ENCODE measurements at regions of chr11 and their contacts with region 1.

Region 1: DNA sequence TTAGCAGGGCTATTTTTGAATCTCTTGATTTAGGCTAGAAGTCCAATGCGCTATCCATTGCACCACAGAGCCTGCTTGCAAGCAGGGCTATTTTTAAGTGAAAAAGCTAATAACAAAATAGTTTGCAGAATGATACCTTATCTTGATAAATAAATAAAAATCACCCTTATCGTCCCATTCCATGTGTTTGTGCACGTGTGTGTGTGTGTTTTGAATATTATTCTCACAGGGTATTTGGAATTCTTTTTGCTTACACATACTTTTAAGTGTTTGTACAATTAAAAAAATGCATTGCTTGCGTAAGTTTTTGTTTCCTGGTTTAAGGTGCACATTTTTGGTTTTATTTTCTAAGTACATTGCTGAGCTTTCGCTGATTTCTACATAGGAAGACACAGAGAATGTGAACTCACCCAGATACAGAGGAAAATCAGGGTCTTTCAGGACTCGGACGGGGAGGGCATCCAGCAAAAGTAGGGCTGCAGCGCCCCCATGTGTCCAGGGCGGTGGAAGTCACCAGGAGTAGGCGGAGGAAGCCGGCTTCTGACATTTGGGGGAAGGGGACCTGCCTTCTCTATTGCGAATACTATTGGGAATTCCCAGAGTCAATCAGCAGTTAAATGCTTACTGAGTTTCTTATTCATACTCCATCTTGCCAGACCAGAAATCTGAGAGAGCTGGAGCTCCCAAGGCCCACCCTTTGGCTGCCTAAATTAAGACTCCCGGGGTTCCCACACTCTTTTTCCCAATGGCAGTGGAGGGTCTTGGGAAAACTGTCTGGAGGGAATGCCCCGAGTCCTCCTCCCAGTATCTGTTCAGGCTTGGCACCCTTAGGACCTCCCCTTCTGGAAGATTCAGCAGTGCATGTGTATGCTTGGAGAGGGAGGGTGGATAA is 27.2 kb downstream of the SLC1A2 start:
- DNase-seq: peak in 1 of 2 donors; percentile 87
- H3K4me3 ChIP-seq: peak overlapping the region; percentile 39 to 44
- H3K27ac ChIP-seq: peak overlapping the region; percentile 66 to 74
- H3K4me1 ChIP-seq: peaks cover 4 to 27% of the 10 kb centered on the region in 2 donors
- H3K27me3 ChIP-seq: no peaks in the 10 kb centered on the region
- CTCF ChIP-seq: peak; percentile 91 to 95 (median 94)

Region 2: DNA sequence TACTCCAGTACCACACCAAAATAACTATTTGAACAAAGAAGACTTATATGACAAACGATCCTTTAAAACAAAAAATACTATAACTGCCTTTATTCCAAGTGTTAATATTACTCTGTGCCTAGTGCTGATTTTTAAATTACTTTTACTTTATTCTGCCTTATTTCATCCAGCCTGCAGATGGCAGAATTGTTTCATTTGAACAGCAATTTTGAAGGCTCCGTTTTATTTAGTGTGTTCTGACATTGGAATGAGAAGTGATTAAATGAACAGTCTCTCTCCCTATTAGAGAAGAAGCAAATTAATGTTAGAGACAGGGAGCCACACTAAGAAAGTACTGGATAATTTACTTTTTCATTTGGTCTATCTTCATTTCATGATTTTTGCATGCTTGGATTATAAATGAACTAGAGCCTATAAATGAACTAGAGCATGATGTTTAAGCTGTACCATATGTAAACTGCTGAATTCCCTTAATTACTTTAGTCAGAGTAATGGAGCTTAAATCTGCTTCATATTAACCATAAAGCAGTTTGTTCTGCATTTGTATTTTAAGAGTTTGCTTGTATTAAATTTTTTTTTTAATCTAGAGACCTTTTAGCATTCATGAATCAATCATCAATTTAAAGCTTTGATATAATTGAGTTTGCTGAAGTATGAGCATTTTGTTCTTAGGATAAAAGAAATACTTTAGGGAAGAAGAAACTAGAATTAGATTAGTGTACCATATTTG is 465.9 kb before region 1 on chr11:
- intact Hi-C with region 1: loop called (anchors 1 kb)
- DNase-seq: no peak
- H3K4me3 ChIP-seq: no peak overlapping the region
- H3K27ac ChIP-seq: no peak overlapping the region
- H3K4me1 ChIP-seq: peaks cover 6 to 7% of the 10 kb centered on the region in 2 donors
- H3K27me3 ChIP-seq: no peaks in the 10 kb centered on the region
- CTCF ChIP-seq: peak; percentile 49 to 80 (median 51)

Region 3: GRCh38 chr11:34997952-34998528 is 394.1 kb before region 1 on chr11:
- intact Hi-C with region 1: loop called (anchors 1 kb)
- DNase-seq: no peak
- H3K4me3 ChIP-seq: no peak overlapping the region
- H3K27ac ChIP-seq: no peak overlapping the region
- H3K4me1 ChIP-seq: no peaks in the 10 kb centered on the region
- H3K27me3 ChIP-seq: no peaks in the 10 kb centered on the region
- CTCF ChIP-seq: peak; percentile 35 to 69 (median 43)

Region 4: DNA sequence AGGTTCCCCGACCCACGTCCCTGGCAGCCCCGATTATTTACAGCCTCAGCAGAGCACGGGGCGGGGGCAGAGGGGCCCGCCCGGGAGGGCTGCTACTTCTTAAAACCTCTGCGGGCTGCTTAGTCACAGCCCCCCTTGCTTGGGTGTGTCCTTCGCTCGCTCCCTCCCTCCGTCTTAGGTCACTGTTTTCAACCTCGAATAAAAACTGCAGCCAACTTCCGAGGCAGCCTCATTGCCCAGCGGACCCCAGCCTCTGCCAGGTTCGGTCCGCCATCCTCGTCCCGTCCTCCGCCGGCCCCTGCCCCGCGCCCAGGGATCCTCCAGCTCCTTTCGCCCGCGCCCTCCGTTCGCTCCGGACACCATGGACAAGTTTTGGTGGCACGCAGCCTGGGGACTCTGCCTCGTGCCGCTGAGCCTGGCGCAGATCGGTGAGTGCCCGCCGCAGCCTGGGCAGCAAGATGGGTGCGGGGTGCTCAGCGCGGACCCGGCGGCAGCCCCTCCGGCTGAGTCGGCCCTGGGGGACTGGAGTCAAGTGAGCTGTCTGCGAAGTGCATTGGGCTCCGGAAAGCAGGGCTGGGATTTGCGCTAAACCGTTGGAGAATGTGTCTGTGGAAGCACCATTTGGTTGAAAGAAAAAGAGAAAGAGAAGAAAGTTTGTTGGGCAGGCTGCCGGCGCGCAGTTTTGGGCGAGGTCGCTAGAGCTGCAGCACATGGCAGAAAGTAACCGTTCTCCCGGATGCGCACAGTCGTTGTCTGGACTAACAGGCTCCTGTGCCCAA is 253.0 kb before region 1 on chr11 and contains the start of gene CD44:
- intact Hi-C with region 1: loop called (anchors 1 kb)
- DNase-seq: peak; percentile 74 to 93
- H3K4me3 ChIP-seq: peak within 1 kb of the TSS; percentile 70 to 83
- H3K27ac ChIP-seq: peak within 1 kb of the TSS; percentile 90 to 98
- H3K4me1 ChIP-seq: peaks cover 11 to 27% of the 10 kb centered on the region in 2 donors
- H3K27me3 ChIP-seq: no peaks in the 10 kb centered on the region
- CTCF ChIP-seq: peak in 1 of 3 experiments; percentile 9
- total RNA-seq, gene CD44: 188 TPM

Region 5: DNA sequence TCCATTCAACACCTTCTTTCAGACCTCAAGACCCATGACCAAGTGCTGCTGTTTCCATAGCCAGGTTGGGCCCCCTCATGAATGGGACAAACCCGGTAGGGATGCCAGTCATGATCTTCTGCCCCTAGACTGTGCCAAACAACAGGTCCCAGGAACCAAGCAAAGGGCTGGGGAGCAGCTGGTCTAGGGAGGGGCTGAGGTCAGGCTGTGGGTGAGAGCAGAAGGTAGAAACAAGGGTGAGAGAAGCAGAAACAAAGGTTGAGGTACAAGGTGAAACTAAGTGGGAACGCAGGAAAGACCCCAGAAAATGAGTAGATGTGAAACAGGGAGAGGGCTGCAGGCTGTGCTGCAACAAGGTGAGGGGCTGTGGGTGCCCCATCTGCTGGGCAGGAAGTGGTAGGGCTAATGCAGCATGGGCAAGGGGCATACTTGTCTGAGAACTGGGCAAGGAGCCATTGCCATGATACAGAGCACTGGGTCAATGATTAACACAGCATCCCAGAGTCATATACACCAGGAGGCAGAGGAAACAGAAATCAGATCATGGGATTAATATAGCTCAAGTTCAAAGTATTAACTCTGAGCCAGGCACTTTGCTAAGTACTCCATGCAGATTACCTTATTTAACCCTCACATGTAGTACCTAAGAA is 18.8 kb before region 1 on chr11:
- intact Hi-C with region 1: no loop called
- DNase-seq: no peak
- H3K4me3 ChIP-seq: no peak overlapping the region
- H3K27ac ChIP-seq: no peak overlapping the region
- H3K4me1 ChIP-seq: no peaks in the 10 kb centered on the region
- H3K27me3 ChIP-seq: no peaks in the 10 kb centered on the region
- CTCF ChIP-seq: no peak

Region 6: GRCh38 chr11:35419184-35419829 is 27.1 kb after region 1 on chr11 and contains the start of gene SLC1A2:
- intact Hi-C with region 1: no loop called
- DNase-seq: no peak
- H3K4me3 ChIP-seq: peak within 1 kb of the TSS; percentile 44 to 66
- H3K27ac ChIP-seq: no peak within 1 kb of the TSS
- H3K4me1 ChIP-seq: peaks cover 3 to 22% of the 10 kb centered on the region in 2 donors
- H3K27me3 ChIP-seq: peaks cover 10% of the 10 kb centered on the region
- CTCF ChIP-seq: no peak
- total RNA-seq, gene SLC1A2: 0.32 TPM

Region 7: DNA sequence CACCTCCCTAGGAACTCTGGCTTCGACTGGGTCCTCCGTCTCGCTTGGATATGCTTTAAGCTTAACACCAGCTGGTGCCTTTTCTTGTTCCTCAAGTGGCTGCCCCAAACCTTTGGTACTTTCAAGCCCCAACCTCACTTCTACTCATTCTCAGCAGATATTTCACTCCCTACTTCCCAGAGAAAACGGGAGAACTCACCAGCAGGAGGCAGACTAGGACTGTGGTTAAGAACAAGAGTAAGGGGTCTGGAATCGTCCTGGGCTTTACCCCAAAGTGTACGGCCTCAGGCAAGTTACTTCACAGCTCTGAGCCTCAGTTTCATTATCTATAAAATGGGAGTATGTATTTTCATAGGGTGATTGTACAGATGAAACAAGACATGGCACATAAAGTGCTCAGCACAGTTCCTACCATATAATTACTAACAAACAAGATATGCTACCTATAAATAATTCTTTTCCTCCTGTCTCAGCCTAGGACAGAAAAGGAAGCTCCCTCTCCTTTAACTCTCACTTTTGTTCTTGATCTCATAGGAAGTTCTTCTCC is 95.4 kb after region 1 on chr11:
- intact Hi-C with region 1: no loop called
- DNase-seq: no peak
- H3K4me3 ChIP-seq: no peak overlapping the region
- H3K27ac ChIP-seq: no peak overlapping the region
- H3K4me1 ChIP-seq: no peaks in the 10 kb centered on the region
- H3K27me3 ChIP-seq: no peaks in the 10 kb centered on the region
- CTCF ChIP-seq: peak in 2 of 3 experiments; percentile 23 to 47